ENCODE measurements at regions of chr5 and their contacts with region 1.

Region 1: DNA sequence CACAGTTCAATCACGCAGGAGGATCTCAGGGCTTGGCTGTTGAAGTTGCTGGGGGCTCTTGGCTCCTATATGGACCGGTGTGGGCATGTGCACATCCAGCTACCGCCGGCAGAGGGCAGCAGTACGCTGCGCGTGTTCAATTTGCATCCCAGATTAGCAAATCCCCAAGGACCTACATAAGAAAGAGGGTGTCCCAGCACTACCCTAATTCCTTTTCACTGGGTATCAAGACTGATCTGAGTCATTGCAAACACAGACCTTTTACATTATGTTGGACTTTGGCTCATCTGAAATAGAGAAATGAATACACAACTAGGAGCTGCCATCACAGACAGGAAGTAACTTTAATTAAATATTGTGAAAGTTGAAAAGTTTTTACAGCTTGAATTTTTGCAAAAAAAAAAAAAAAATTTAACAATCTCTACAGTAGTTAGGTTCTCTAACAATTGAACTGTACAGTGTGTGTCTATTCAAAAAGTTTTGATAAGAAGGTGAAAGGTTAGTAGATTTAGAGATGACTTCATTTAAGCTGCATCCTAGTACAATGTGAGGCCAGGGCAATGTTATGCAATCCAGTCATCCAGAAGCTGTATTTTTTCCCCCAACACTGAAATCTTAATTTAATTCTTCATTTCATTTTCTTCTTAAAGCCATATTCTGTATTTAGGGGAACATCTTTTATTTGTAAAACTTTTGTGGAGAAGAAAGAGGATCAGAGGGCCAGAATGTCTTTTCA is 404.0 kb downstream of the EBF1 start:
- DNase-seq: peak; percentile 79 to 92
- ATAC-seq: peak; percentile 86
- H3K4me3 ChIP-seq: no peak overlapping the region
- H3K27ac ChIP-seq: no peak overlapping the region
- H3K4me1 ChIP-seq: peaks cover 2 to 18% of the 10 kb centered on the region in 2 donors
- H3K27me3 ChIP-seq: no peaks in the 10 kb centered on the region

Region 2: DNA sequence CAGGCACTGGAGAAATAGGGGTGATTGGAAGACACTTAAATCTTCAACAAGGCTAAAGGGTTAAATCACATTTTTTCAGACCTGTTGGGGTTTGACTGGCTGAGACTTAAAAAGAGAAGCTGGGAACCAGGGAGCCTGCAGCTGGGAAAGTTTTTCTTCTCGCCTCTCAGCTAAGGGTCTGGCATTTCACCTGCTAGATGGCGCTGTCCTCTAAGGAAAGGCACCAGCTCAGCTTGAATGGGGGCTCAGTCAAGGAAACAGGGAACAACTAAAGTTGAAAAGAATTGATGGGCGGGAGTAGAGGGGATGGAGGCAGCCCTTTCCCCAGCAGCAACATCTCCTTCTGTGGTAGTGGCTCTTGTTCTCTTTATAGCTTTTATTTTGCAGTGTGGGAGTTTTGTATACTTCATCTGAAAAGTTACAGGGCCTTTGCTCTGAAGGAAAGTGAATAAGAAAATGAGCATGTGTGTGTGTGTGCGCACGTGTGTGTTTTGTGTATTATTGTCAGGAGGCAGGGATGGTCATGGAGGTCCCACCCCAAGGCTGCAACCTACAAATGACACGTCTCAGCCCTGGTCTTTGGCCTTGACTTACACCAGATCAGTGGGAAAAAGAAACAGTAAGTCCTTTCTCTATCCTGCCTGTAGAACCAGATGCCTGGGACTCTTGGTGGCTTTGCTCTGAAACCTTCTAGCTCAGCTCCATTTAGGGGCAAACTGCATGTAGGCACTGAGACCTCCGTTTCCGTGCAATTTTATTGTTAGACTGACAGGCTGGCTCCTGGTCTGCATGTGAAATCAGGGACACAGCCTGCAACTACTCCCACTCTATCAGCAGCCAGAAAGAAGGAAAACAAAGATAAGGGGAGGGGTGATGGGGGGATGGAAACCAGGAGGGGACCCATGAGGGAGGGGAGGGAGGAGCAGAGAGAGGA is 520.6 kb before region 1 on chr5:
- intact Hi-C with region 1: loop called in 1 of 2 experiments (anchors 2 kb)
- DNase-seq: peak; percentile 81 to 85
- ATAC-seq: peak; percentile 87
- H3K4me3 ChIP-seq: no peak overlapping the region
- H3K27ac ChIP-seq: no peak overlapping the region
- H3K4me1 ChIP-seq: no peaks in the 10 kb centered on the region
- H3K27me3 ChIP-seq: no peaks in the 10 kb centered on the region

Region 3: DNA sequence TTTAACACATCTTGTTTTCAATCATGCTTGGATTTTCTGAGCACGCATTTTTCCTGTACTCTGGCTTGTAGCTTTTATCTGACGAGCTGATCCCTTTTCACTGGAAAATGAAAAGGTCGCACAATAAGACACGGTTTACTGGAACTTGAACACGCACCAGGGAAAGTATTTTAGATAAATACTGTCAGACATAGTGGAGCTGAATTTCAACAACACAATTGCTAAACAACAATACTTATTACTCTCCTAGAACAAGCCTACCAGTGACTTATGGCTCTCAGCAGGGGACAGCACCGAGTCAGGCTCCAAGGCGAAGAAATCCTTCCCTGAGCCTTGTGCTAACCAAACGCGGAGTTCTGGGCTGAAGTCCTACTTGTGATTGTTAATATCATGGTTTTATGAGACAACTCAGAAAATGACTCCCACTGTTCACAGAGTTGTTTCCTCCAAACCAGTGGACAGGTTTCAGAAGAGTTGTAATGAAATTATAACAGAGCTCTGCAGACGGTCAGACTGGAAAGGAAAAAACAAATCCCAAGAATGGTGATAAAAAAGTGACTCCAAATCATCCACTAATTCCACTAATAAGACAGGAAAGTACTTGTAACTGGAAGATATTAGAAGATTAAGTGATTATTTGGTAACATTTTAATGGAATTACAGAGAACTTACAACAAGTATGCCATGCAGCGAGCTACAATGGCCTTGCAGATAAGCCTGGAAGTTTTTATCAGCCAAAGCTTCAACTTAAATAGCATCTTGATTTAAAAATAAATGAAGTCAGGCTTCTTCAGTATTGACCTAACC is 44.4 kb after region 1 on chr5:
- intact Hi-C with region 1: loop called in 1 of 2 experiments (anchors 5 kb)
- DNase-seq: no peak
- ATAC-seq: peak; percentile 82
- H3K4me3 ChIP-seq: no peak overlapping the region
- H3K27ac ChIP-seq: no peak overlapping the region
- H3K4me1 ChIP-seq: peaks cover 0 to 5% of the 10 kb centered on the region in 2 donors
- H3K27me3 ChIP-seq: no peaks in the 10 kb centered on the region

Region 4: DNA sequence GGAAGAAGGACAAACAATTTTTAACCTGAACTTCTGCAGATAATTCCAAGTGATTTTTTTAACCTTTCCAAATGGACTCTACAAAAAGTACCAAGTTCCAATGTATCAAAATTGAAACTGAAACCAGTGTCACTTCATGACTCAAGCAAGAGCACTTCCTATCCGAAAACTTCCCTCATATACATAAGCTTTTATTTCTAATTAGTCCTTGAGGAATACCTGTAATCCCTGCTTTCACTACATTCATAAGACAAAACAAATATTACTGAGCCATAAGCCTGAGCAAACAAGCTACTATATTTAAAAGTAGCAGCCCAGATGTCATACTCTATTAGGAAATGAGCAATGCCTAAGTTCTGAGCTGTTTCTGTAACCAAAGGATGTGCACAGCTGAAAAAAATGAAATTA is 179.5 kb after region 1 on chr5:
- intact Hi-C with region 1: loop called in 1 of 2 experiments (anchors 5 kb)
- DNase-seq: no peak
- ATAC-seq: peak; percentile 40
- H3K4me3 ChIP-seq: peak overlapping the region; percentile 26 to 87
- H3K27ac ChIP-seq: peak overlapping the region in 1 of 2 donors; percentile 87
- H3K4me1 ChIP-seq: peaks cover 6 to 29% of the 10 kb centered on the region in 2 donors
- H3K27me3 ChIP-seq: no peaks in the 10 kb centered on the region

Measured in aorta (tissue), 5 donors.